Endothelial cell of umbilical vein (primary cell): ENCODE measurements at regions of chr19 and their contacts with region 1.

Region 1: DNA sequence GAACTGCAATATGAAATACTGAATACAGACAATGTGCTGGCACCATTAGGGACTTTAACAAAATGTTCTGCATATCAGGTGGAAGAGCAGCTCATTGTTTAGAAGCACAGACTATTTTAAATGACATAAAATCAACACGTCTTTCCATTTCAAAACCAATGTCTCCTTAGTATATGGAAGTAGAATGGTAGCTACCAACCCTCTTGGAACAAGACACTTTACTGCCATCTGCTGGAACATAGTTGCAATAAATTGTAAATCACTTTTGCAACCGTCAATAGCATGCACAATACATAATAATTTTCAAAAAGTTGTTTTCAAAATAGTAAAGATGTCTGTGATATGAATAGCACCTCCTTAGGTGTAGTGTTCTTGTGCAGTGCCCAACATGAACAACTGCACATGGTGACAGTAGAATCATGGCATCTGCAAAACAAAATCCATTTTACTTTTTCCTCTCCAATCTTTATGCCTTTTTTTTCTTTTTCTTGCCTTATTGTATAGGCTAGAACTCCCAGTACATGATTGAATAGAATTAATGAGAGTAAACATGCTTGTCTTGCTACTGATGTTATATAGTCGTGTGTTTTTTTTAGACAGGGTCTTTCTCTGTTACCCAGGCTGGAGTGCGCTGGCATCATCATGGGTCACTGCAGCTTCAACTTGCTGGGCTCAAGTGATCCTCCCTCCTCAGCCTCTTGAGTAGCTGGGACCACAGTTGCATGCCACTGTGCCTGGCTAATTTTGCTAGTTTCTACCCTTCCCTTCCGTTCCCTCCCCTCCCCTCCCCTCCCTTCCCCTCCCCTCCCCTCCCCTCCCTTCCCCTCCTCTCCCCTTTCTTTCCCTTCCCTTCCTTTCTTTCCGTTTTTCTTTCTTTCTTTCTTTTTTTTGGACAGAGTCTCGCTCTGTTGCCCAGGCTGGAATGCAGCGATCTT is 7.8 kb upstream of the LYPD5 start:
- DNase-seq: peak; percentile 58
- H3K4me3 ChIP-seq: no peak overlapping the region
- H3K27ac ChIP-seq: no peak overlapping the region
- H3K4me1 ChIP-seq: no peaks in the 10 kb centered on the region
- H3K27me3 ChIP-seq: no peaks in the 10 kb centered on the region
- CTCF ChIP-seq: peak; percentile 32 to 34
- POLR2A ChIP-seq: no peak

Region 2: GRCh38 chr19:43555185-43555770 is 254.8 kb before region 1 on chr19:
- CTCF ChIA-PET with region 1: interaction called, 34 read pairs
- POLR2A ChIA-PET with region 1: no interaction called
- dilution Hi-C with region 1: no loop called
- intact Hi-C with region 1: no loop called
- DNase-seq: peak; percentile 70
- H3K4me3 ChIP-seq: no peak overlapping the region
- H3K27ac ChIP-seq: no peak overlapping the region
- H3K4me1 ChIP-seq: no peaks in the 10 kb centered on the region
- H3K27me3 ChIP-seq: no peaks in the 10 kb centered on the region
- CTCF ChIP-seq: peak; percentile 84 to 94
- POLR2A ChIP-seq: no peak

Region 3: GRCh38 chr19:43639519-43640423 is 170.3 kb before region 1 on chr19 and contains the start of gene CADM4:
- CTCF ChIA-PET with region 1: no interaction called
- POLR2A ChIA-PET with region 1: no interaction called
- dilution Hi-C with region 1: no loop called
- intact Hi-C with region 1: no loop called
- DNase-seq: no peak
- H3K4me3 ChIP-seq: peak within 1 kb of the TSS in 2 of 3 experiments; percentile 19 to 49
- H3K27ac ChIP-seq: no peak within 1 kb of the TSS
- H3K4me1 ChIP-seq: peaks cover 7% of the 10 kb centered on the region
- H3K27me3 ChIP-seq: peaks cover 15 to 25% of the 10 kb centered on the region in 2 experiments
- CTCF ChIP-seq: no peak
- POLR2A ChIP-seq: no peak
- total RNA-seq, gene CADM4: 6.7 and 7.5 TPM in 2 replicates

Region 4: DNA sequence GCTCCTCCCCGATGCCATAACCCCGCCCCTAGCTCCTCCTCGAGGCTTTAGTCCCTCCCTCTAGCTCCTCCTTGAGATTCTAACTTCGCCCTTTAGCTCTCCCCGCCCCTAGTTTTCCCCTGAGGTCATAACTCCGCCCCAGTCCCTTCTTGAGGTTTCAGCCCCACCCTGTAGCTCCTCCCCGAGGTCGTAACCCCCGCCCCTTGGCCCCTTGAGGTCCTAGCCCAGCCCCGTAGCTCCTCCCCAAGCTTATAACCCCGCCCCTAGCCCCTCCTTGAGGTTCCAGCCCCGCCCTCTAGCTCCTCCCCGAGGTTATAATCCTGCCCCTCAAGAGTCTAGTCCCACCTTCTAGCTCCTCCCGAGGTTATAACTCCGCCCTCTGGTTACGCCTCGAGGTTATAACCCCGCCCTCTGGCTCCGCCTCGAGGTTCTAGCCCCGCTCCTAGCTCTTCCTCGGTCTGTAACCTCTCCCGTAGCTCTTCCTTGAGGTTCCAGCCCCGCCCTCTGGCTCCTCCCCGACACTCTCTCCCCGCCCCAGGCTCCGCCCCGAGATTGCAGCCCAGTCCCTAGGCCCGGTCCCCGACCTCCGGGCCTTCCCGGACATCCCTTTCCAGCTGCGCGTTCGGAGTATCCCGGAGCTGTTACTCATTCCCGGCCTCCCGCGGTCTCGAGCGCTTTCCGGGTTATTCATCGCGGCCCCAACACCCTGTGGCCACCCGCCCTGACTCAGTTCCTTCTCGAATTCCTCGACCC is 141.4 kb before region 1 on chr19:
- CTCF ChIA-PET with region 1: interaction called, 9 read pairs
- POLR2A ChIA-PET with region 1: no interaction called
- dilution Hi-C with region 1: no loop called
- intact Hi-C with region 1: loop called (anchors 2 kb)
- DNase-seq: peak; percentile 99
- H3K4me3 ChIP-seq: peak overlapping the region; percentile 54 to 73 (median 73)
- H3K27ac ChIP-seq: peak overlapping the region; percentile 98
- H3K4me1 ChIP-seq: peaks cover 35% of the 10 kb centered on the region
- H3K27me3 ChIP-seq: no peaks in the 10 kb centered on the region
- CTCF ChIP-seq: no peak
- POLR2A ChIP-seq: no peak

Region 5: DNA sequence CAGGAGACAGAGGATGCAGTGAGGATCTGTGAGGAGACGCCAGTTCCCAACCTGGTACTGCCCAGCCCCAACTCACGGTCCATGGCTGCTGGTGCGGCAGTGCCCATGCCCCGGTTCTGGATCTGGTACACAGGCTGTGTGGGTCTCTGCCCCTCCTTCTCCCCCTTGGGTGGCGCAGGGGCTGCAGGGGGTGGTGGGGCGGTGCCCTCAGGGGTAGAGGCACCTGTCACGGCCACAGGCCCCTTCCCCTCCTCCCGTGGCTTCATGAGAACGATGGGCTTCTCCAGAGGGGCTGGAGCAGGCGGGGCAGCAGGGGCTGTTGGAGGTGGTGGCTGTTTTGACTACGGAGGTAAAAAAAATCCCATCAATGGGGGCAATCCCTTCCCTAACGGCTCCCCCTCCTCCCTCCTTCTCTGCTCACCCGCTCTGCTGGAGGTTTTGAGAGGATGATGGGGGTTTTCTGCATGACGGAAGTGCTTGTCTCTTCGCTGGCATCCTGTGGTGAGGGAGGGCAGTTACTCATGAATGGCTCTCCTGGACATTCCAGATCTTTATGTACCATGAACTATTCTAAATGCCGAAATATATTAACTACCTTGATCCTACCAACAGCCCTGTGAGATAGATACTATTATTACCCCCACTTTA is 62.3 kb before region 1 on chr19:
- CTCF ChIA-PET with region 1: interaction called, 136 read pairs
- POLR2A ChIA-PET with region 1: interaction called, 4 read pairs
- dilution Hi-C with region 1: no loop called
- intact Hi-C with region 1: loop called (anchors 1 kb)
- DNase-seq: no peak
- H3K4me3 ChIP-seq: no peak overlapping the region
- H3K27ac ChIP-seq: no peak overlapping the region
- H3K4me1 ChIP-seq: peaks cover 5% of the 10 kb centered on the region
- H3K27me3 ChIP-seq: no peaks in the 10 kb centered on the region
- CTCF ChIP-seq: no peak
- POLR2A ChIP-seq: no peak

Region 6: GRCh38 chr19:43765109-43765876 is 44.7 kb before region 1 on chr19:
- CTCF ChIA-PET with region 1: interaction called, 25 read pairs
- POLR2A ChIA-PET with region 1: no interaction called
- dilution Hi-C with region 1: no loop called
- intact Hi-C with region 1: no loop called
- DNase-seq: peak; percentile 68
- H3K4me3 ChIP-seq: no peak overlapping the region
- H3K27ac ChIP-seq: peak overlapping the region; percentile 61
- H3K4me1 ChIP-seq: peaks cover 17% of the 10 kb centered on the region
- H3K27me3 ChIP-seq: no peaks in the 10 kb centered on the region
- CTCF ChIP-seq: no peak
- POLR2A ChIP-seq: no peak

Region 7: GRCh38 chr19:43798546-43799409 is 11.3 kb before region 1 on chr19:
- CTCF ChIA-PET with region 1: interaction called, 19 read pairs
- POLR2A ChIA-PET with region 1: no interaction called
- dilution Hi-C with region 1: no loop called
- intact Hi-C with region 1: no loop called
- DNase-seq: no peak
- H3K4me3 ChIP-seq: peak overlapping the region in 2 of 3 experiments; percentile 7 to 21
- H3K27ac ChIP-seq: no peak overlapping the region
- H3K4me1 ChIP-seq: peaks cover 13% of the 10 kb centered on the region
- H3K27me3 ChIP-seq: peaks cover 3 to 8% of the 10 kb centered on the region in 2 experiments
- CTCF ChIP-seq: no peak
- POLR2A ChIP-seq: no peak